ENCODE measurements at regions of chr20 and their contacts with region 1.

Region 1: DNA sequence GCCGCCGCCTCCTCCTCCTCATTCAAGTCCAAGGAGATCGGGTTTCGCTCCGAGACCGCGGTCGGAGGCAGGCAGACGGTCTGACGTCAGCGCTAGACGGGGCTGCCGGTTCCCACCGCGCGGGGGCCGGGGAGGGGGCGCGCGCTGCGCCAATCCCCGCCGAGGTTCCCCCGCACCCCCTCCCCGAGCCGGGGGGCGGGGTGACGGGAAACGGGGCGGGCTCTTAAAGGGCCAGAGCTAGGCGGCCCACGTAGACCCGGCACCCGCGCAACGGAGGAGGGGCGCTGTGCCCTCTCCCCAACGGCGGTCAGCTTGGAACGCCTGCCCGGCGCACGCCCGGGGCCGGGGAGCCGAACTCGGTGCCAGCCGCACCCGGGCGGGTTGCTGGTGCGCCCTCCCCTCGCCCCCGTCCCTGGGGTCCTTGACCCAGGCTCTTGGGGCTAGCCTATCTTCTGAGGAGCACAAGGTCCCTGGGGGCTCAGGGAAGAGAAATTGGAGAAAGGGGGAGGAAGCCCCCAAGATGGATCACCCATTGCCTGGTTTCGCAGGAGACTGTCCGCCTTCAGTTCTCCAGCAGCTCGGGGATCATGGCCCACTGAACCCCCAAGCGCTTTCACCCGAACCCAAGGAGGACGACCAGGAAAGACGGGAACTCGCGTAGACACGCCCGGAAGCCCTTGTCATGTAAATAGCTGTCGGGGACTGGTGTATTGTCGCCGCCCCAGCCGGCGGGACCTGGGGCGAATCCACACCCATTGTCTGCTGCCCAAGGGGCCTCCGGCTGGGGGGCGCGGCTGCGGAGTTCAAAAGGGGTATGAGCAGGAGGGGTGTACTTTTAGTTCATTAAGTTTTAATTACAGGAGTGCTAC is at the start of gene PMEPA1:
- DNase-seq: peak; percentile 96
- ATAC-seq: peak; percentile 85 to 93 (median 88)
- H3K4me3 ChIP-seq: peak within 1 kb of the TSS; percentile 69
- H3K27ac ChIP-seq: peak within 1 kb of the TSS; percentile 83
- H3K4me1 ChIP-seq: peaks cover 62% of the 10 kb centered on the region
- H3K27me3 ChIP-seq: no peaks in the 10 kb centered on the region
- CTCF ChIP-seq: no peak
- total RNA-seq, gene PMEPA1: 8.9 to 19.5 (median 15.6) TPM

Region 2: DNA sequence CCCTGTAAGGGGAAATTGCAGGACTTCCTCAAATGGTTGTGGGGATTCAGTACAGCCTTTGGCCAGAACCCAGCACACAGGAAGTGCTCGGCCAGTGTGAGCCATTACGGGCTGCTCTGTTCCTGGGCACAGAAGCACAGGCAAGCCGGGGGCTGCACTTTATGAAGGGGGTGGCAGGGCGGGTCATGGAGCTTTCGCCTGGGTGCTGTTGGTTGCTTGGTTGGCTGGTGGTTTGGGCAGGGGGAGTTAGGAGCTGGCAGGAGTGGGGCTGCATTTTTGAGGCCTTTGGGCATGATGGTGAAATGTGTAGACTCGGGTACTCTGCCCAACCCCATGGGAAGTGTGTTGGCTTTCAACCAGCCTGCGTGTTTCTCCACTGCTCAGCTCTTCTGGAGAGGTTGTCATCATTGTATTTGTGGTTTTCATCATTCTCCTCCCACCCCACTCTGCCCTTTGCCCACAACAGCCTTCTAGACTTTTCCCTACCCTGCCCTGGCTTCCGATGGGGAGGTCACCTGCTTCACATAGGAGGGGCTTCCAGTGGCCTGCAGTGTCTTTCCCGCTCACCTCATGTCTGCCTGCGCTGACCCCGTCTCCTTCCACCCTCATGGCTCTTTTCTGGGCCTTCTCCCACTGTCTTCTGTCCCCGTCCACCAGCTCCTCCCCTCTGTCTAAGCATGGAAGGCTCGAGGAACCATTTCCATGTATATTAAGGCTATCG is 335.1 kb before region 1 on chr20:
- intact Hi-C with region 1: loop called in 1 of 2 experiments (anchors 10 kb)
- DNase-seq: peak in 1 of 2 donors; percentile 62
- ATAC-seq: peak in 2 of 4 donors; percentile 52 to 62
- H3K4me3 ChIP-seq: no peak overlapping the region
- H3K27ac ChIP-seq: no peak overlapping the region
- H3K4me1 ChIP-seq: no peaks in the 10 kb centered on the region
- H3K27me3 ChIP-seq: no peaks in the 10 kb centered on the region
- CTCF ChIP-seq: no peak

Region 3: GRCh38 chr20:57748601-57749130 is 38.5 kb after region 1 on chr20:
- intact Hi-C with region 1: loop called in 1 of 2 experiments (anchors 5 kb)
- DNase-seq: peak; percentile 78 to 84
- ATAC-seq: peak; percentile 79 to 90 (median 88)
- H3K4me3 ChIP-seq: peak overlapping the region; percentile 60
- H3K27ac ChIP-seq: peak overlapping the region; percentile 63
- H3K4me1 ChIP-seq: peaks cover 18% of the 10 kb centered on the region
- H3K27me3 ChIP-seq: no peaks in the 10 kb centered on the region
- CTCF ChIP-seq: no peak

Measured in psoas muscle (tissue), 8 donors.